B cell (primary cell): ENCODE measurements at regions of chr3 and their contacts with region 1.

Region 1: DNA sequence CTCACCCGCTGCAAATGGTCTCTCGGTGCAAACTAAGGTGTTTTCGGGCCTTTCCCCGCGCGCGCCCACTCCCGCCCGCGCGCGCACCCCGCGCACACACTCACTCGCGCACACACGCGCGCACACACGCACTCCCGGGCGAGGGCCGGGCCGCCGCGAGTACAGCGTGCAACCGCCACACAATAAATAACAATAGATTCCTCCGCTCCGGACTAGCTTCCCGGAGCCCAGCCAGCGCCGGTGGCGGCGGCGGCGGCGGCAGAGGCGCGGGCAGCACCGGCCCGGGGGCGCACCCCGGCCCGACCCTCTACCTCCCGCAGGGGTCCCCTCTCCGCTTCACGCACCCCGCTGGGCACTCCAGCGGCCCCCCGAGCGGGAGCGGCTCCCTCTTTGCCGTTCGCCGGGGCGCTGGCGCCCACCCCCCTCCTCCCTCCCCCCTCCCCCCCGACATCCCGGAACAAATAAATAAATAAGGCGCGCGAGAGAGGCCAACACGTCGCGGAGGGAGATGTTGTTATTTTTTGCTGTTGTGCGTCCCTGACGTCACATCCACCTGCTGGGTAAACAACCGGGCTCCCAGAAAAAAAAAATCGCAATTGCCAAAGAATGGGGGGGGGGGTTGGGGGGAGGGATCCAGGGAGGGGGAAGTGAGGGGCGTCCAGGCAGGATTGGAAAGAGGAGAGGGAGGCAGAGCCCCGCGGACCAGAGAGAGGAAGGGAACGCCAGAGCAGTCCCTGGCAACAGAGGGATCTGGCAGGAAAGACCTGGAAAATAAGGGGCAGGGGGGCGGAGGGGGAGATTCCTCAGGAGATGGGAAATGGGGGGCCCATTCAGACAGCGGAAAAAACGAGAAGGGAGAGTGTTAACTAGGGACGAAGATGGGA is at the start of gene FOXP1:
- DNase-seq: peak; percentile 90
- ATAC-seq: peak; percentile 26
- H3K4me3 ChIP-seq: peak within 1 kb of the TSS; percentile 80 to 97 (median 92)
- H3K4me3 Mint-ChIP-seq: peak within 1 kb of the TSS; percentile 96
- H3K27ac ChIP-seq: peak within 1 kb of the TSS; percentile 90 to 97
- H3K27ac Mint-ChIP-seq: peak within 1 kb of the TSS; percentile 97
- H3K4me1 ChIP-seq: peaks cover 19 to 42% of the 10 kb centered on the region in 2 donors
- H3K4me1 Mint-ChIP-seq: peaks cover 44% of the 10 kb centered on the region
- H3K27me3 ChIP-seq: peaks cover 0 to 9% (median 4%) of the 10 kb centered on the region in 4 experiments
- H3K27me3 Mint-ChIP-seq: peaks cover 3% of the 10 kb centered on the region
- CTCF ChIP-seq: no peak
- total RNA-seq, gene FOXP1: 508 and 530 TPM in 2 replicates

Region 2: DNA sequence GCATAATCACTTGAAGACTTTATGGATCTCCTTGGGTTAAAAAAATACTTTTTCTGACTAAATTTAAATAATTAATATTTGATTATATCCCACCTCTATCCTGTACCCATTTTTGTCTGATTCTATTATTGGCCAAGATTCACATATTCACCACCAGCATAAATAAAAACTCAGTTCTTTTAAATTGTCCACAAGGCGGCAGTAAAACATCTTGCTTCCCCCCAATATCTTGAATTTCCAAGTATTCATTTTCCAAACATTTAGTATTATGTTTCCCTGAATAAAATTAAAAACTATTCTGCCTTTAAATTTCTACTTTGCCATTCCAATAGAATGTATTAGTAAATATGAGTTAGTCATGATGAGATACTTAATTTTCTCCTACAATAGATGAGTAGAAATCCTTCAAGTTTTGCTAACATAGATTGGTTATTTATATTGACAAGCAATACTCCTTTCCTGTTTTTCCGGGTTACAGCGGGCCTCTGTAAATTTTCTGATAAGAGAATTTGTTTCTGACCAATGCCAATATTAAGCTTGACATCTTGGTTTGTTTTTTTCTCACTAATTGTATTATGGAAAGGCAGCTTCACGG is 1052.6 kb before region 1 on chr3:
- CTCF ChIA-PET with region 1: interaction called, 5 read pairs
- POLR2A ChIA-PET with region 1: no interaction called
- intact Hi-C with region 1: loop called (anchors 5 kb)
- DNase-seq: peak; percentile 10
- ATAC-seq: no peak
- H3K4me3 ChIP-seq: no peak overlapping the region
- H3K4me3 Mint-ChIP-seq: no peak overlapping the region
- H3K27ac ChIP-seq: no peak overlapping the region
- H3K27ac Mint-ChIP-seq: no peak overlapping the region
- H3K4me1 ChIP-seq: no peaks in the 10 kb centered on the region
- H3K4me1 Mint-ChIP-seq: no peaks in the 10 kb centered on the region
- H3K27me3 ChIP-seq: no peaks in the 10 kb centered on the region
- H3K27me3 Mint-ChIP-seq: peaks cover 4% of the 10 kb centered on the region
- CTCF ChIP-seq: peak; percentile 61

Region 3: GRCh38 chr3:71006810-71007785 is 576.7 kb before region 1 on chr3:
- CTCF ChIA-PET with region 1: interaction called, 11 read pairs
- POLR2A ChIA-PET with region 1: interaction called, 8 read pairs
- intact Hi-C with region 1: loop called (anchors 1 kb)
- DNase-seq: peak; percentile 69
- ATAC-seq: no peak
- H3K4me3 ChIP-seq: no peak overlapping the region
- H3K4me3 Mint-ChIP-seq: no peak overlapping the region
- H3K27ac ChIP-seq: peak overlapping the region in 1 of 2 donors; percentile 98
- H3K27ac Mint-ChIP-seq: peak overlapping the region; percentile 87
- H3K4me1 ChIP-seq: peaks cover 47 to 54% of the 10 kb centered on the region in 2 donors
- H3K4me1 Mint-ChIP-seq: peaks cover 64% of the 10 kb centered on the region
- H3K27me3 ChIP-seq: no peaks in the 10 kb centered on the region
- H3K27me3 Mint-ChIP-seq: no peaks in the 10 kb centered on the region
- CTCF ChIP-seq: peak; percentile 77

Region 4: DNA sequence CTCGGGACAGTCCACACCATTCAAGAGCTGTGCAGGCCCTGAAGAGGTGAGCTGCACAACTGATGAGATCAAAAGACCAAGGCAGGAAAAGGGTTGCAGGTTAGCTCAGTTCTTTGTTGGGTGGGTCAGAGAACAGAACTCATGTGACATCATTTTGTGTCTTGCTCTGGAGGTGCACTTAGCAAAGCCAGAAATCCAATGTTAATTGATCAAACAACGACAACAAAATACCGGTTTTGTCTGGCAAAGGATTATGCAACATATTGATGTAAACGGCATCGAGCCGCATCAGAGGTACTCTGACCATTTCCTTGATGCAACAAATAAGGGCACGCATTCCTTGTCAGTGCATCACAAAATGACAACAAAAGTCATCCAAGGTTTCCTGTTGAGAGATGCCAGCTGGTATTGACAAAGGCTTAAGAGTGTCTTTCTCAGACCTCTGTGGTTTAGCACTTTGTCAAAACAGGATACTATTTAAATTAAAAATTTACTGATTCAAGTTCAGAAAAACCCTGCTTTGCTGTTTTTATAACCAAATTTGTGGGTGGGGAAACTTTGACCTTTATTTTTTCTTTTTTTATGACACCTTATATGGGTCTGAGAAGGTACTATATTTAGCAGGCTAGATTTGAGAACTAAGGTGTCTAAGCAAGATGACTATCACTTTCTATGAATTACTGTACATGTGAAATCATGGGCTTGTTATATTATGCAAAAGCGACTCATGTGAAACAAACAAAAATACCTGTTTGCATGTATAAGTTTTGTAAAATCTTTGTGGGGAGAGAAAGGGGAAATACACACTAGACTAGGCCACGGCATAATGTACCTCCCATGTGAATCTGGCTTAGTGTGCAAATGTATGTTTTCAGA is 496.4 kb before region 1 on chr3:
- CTCF ChIA-PET with region 1: interaction called, 4 read pairs
- POLR2A ChIA-PET with region 1: no interaction called
- intact Hi-C with region 1: loop called (anchors 1 kb)
- DNase-seq: peak; percentile 82
- ATAC-seq: peak; percentile 67
- H3K4me3 ChIP-seq: peak overlapping the region in 1 of 5 experiments; percentile 39
- H3K4me3 Mint-ChIP-seq: peak overlapping the region; percentile 72
- H3K27ac ChIP-seq: peak overlapping the region; percentile 87 to 91
- H3K27ac Mint-ChIP-seq: peak overlapping the region; percentile 88
- H3K4me1 ChIP-seq: peaks cover 88 to 93% of the 10 kb centered on the region in 2 donors
- H3K4me1 Mint-ChIP-seq: peaks cover 86% of the 10 kb centered on the region
- H3K27me3 ChIP-seq: no peaks in the 10 kb centered on the region
- H3K27me3 Mint-ChIP-seq: no peaks in the 10 kb centered on the region
- CTCF ChIP-seq: no peak

Region 5: DNA sequence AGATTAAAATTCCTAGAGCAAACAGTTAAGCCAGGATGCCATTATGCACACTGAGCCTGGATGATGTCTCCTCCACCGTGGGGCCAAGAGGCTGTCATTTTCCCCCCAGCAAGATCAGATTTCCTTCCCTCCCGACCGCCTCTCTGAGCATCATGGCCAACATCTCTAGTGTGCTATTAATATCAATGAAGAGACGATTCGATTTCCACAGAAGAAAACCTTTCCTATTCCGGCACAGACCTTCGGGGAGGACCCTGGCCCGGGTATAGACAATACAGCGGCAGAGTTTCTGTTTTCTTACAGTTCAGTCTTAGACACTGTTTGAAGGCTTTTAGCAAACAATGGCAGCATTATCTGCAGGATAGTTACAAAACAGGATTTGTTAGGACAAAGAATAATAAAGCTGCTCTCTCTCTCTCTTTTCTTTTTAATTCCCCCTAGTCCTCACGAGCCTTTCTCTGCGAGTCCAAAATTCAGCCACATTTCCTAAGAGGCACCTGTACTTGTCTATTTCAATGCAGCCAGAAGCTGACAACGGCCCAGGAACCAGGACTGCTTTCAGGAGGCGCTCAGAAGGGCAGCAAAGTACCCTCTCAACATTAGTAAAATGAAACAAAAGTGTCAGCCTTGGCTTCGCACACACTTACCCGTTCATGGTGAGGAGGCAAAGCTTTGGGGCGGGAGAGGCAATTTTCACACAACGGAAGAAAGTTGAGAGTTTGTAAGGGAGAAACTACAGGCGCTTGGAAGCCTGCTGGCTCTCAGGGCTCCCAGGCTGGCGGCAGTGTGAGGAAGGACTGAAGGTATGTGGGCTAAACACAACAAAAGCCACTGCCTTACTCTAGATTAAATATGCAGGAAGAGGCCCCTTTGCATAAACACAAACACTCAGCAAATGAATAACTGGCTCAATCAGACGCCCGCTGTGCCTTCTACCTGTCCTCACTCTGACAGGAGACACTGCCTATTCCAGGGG is 278.3 kb before region 1 on chr3:
- CTCF ChIA-PET with region 1: interaction called, 3 read pairs
- POLR2A ChIA-PET with region 1: no interaction called
- intact Hi-C with region 1: loop called (anchors 2 kb)
- DNase-seq: peak; percentile 49
- ATAC-seq: peak; percentile 60
- H3K4me3 ChIP-seq: peak overlapping the region; percentile 50 to 85 (median 67)
- H3K4me3 Mint-ChIP-seq: peak overlapping the region; percentile 88
- H3K27ac ChIP-seq: peak overlapping the region; percentile 70 to 84
- H3K27ac Mint-ChIP-seq: peak overlapping the region; percentile 94
- H3K4me1 ChIP-seq: peaks cover 47 to 57% of the 10 kb centered on the region in 2 donors
- H3K4me1 Mint-ChIP-seq: peaks cover 77% of the 10 kb centered on the region
- H3K27me3 ChIP-seq: no peaks in the 10 kb centered on the region
- H3K27me3 Mint-ChIP-seq: no peaks in the 10 kb centered on the region
- CTCF ChIP-seq: no peak

Region 6: DNA sequence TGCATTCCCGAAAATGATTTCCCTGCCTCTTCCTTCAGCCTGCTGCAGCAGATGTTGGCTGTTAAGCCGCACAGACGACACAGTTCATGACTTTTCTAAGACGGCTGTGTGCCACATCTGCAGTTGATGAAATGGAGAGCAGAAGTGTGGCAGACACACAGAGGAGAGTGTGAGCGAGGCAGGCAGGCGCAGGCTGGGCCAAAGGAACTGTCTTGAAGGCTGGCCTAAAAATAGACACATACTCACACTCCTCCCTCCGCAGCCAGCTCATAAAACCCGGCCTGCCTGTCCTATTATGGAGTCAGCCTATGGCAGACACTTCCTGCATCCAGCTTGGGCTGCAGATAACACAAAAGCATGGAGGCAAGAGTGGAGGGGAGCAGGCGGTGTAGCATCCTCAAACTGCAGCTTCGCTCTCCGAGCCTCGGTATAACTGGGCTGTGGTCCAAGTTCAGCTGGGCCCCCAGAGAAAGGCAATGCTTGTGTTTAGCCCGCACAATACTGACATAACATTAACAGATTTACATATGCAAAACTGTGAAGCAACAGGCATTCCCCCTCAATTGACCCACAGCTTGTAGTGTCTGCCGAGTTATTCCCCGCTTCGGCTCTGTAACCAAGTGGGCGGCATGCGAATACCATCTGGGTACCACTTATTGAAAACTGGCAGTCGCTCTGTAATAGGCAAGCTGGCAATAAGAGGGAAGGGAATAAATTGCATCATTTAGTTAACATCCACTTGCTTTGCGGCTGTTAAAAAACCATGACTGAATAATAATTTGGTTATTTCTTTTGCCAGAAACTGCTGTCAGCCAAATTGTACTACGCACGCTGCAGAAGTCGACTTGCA is 41.1 kb before region 1 on chr3:
- CTCF ChIA-PET with region 1: interaction called, 3 read pairs
- POLR2A ChIA-PET with region 1: interaction called, 3 read pairs
- intact Hi-C with region 1: loop called (anchors 2 kb)
- DNase-seq: peak; percentile 50
- ATAC-seq: peak; percentile 80
- H3K4me3 ChIP-seq: peak overlapping the region in 4 of 5 experiments; percentile 4 to 33 (median 14)
- H3K4me3 Mint-ChIP-seq: peak overlapping the region; percentile 78
- H3K27ac ChIP-seq: peak overlapping the region; percentile 17 to 44
- H3K27ac Mint-ChIP-seq: peak overlapping the region; percentile 76
- H3K4me1 ChIP-seq: peaks cover 16 to 25% of the 10 kb centered on the region in 2 donors
- H3K4me1 Mint-ChIP-seq: peaks cover 40% of the 10 kb centered on the region
- H3K27me3 ChIP-seq: no peaks in the 10 kb centered on the region
- H3K27me3 Mint-ChIP-seq: peaks cover 17% of the 10 kb centered on the region
- CTCF ChIP-seq: no peak

Region 7: GRCh38 chr3:71673486-71673885 is 89.7 kb after region 1 on chr3:
- CTCF ChIA-PET with region 1: no interaction called
- POLR2A ChIA-PET with region 1: no interaction called
- intact Hi-C with region 1: no loop called
- DNase-seq: no peak
- ATAC-seq: no peak
- H3K4me3 ChIP-seq: no peak overlapping the region
- H3K4me3 Mint-ChIP-seq: no peak overlapping the region
- H3K27ac ChIP-seq: no peak overlapping the region
- H3K27ac Mint-ChIP-seq: no peak overlapping the region
- H3K4me1 ChIP-seq: no peaks in the 10 kb centered on the region
- H3K4me1 Mint-ChIP-seq: no peaks in the 10 kb centered on the region
- H3K27me3 ChIP-seq: no peaks in the 10 kb centered on the region
- H3K27me3 Mint-ChIP-seq: no peaks in the 10 kb centered on the region
- CTCF ChIP-seq: no peak